Posterior cingulate gyrus (tissue), 11 donors: ENCODE measurements at regions of chr14 and their contacts with region 1.

Region 1: DNA sequence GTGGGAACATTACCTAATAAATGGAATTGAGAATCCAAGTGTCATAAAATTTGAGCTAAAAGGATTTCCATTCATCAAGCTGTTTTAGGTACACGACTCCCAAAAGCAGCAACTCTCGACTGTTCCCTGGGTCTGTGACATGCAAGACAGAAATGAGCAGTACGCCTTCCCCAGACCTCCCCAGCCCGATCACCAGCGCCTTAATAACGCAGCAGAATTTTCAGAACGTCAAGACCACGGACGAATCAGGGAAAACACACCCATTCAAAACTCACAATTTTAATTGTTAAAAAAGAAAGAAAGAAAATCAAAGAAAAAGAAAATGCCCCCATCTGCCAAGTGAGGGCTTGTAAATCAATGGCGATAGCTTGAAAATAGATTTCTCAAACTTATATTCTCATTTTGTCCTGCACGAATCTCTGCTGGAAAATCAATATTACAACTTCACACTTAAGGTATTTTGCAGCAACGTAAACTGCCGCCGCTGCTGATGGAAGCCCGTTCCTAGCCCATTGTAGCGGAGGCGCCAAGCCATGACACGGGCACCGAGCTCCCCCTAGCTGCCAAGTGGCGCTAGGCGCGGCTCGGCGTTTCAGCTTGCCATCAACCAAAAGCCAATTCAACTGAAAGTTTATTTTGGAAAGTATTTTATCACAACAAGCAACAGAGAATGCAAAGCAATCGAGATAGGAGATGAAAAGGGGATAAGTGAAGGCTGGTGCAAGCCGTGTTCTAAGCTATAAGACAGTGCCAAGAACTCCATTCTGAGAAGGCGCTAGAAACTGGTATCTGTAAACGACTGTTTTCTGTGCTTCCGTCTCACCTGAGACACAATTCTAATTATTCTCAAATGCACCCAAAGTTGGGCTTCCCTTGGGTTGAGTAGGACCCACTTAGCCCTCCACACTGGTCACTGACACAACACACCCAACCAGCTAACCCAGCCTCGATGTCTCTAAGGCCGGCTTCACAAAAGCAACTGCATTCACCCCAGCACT is 5.5 kb downstream of the BCL11B start:
- DNase-seq: peak; percentile 69 to 97 (median 84)

Region 2: GRCh38 chr14:97978341-97978740 is 1288.1 kb before region 1 on chr14:
- intact Hi-C with region 1: loop called (anchors 5 kb)
- DNase-seq: peak; percentile 66 to 97 (median 82)

Region 3: DNA sequence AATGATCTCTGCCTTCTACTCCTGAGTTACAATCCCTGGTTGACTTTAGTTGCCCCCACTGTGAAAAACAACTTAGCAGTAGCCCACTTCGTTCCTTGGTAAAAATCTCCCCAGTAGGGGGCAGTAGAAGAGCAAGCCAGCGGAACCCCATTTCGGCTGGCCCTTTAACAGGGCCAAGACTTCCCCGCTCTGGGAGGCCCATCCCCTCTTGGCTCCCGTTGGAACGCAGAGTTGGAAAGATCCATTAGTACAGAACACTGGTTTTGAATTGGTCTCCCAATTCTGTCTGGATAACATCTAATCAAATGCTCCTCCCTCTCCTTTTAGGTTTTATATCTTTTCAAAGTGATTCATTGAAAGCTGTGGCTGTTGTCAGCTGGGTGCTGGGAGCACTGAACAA is 1127.8 kb before region 1 on chr14:
- intact Hi-C with region 1: loop called (anchors 5 kb)
- DNase-seq: no peak

Region 4: GRCh38 chr14:99155173-99156089 is 111.0 kb before region 1 on chr14:
- intact Hi-C with region 1: no loop called
- DNase-seq: no peak

Region 5: GRCh38 chr14:99169776-99170356 is 96.6 kb before region 1 on chr14:
- intact Hi-C with region 1: no loop called
- DNase-seq: no peak